Gastrocnemius medialis (tissue), 4 donors: ENCODE measurements at regions of chr9 and their contacts with region 1.

Region 1: DNA sequence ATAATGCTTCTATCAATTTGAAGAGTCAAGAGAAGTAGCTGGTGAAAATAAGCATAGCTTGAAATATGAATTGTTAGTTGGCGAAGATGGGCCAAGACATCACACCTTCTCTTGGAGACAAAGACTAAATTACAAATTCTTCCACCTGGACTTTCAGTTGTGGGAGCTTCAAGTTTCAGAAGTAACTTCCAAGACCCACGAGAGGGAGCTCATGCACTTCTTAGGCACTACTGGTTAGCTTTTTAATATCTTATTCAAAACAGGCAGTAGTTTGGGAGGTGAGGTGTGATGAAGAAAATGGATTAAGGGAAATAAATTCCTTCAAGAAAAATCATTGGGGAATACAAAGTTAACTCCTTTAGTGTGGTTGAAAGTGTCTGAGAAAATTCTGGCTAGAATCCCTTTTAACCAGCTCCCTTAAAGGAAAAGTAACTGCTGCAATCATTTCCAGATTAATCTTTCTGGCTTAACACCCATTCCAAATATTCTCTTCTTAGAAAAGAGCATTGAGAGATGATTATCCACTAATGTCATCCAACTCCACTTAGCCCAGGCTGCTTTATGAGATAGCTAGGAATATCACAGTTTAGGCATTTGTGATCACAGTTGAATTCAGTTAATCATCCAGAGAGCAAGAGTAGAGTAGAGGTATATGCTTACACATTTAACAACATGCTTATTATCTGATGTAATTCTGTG is 139.5 kb upstream of the DMRTA1 start:
- DNase-seq: peak in 1 of 2 donors; percentile 3
- ATAC-seq: peak in 1 of 2 donors; percentile 62
- H3K4me3 ChIP-seq: no peak overlapping the region
- H3K27ac ChIP-seq: no peak overlapping the region
- H3K4me1 ChIP-seq: no peaks in the 10 kb centered on the region
- H3K27me3 ChIP-seq: no peaks in the 10 kb centered on the region
- CTCF ChIP-seq: peak in 4 of 5 experiments; percentile 18 to 62 (median 46)
- POLR2A ChIP-seq: no peak

Region 2: DNA sequence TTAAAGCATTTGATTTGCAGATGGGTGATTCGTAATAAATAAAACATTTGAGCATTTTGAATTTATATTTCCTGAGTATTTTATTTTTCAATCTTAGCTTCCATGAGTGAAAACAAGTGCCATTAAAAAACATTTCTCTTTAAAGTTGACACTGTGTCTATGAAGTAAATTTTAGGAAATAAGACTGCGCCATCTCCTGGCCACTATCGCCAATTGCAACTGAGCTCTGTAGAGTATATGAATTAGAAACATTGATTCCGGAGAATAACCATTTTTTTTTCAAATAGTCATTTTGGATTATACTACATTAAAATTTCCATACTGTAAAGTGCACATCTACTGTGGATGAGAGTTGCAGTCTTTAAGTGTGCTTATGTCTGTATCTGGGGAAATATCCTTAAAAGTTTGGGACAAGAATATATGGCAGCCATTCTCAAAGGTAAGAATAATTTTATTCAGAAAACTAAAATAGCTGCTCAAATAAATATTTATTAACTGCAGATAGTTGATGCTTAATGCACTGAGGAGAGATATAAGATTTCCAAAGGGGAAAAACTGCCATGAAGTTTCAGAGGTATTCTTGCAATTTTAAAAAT is 145.4 kb after region 1 on chr9:
- in situ Hi-C with region 1: loop called in 3 of 4 experiments (anchors 5 to 10 kb)
- intact Hi-C with region 1: loop called (anchors 1 kb)
- DNase-seq: peak in 1 of 2 donors; percentile 20
- ATAC-seq: peak; percentile 46 to 60
- H3K4me3 ChIP-seq: no peak overlapping the region
- H3K27ac ChIP-seq: no peak overlapping the region
- H3K4me1 ChIP-seq: peaks cover 12 to 14% of the 10 kb centered on the region in 2 donors
- H3K27me3 ChIP-seq: no peaks in the 10 kb centered on the region
- CTCF ChIP-seq: peak; percentile 59 to 81 (median 72)
- POLR2A ChIP-seq: no peak